ENCODE measurements at regions of chr14 and their contacts with region 1.

Region 1: DNA sequence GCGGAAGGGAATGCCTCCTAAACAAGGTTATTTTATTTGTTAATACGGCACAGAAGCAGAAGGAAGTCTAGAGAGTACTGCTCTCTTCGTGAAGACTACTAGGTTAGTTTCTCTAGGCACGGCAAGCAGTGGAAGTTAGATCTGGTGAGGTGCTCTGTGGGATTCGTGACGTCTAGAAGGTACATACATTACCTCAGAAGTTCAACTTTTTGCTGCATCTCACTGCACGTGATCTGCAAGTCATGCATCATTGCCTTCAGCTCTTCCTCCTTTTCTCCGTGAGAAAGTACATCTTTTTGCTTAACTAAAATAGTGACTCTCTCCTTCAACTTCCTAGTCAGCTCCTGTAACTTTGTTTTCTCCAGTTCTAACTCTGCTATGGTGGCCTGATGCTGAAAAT is 74.7 kb downstream of the NIN start:
- DNase-seq: peak; percentile 22
- CTCF ChIP-seq: no peak

Region 2: DNA sequence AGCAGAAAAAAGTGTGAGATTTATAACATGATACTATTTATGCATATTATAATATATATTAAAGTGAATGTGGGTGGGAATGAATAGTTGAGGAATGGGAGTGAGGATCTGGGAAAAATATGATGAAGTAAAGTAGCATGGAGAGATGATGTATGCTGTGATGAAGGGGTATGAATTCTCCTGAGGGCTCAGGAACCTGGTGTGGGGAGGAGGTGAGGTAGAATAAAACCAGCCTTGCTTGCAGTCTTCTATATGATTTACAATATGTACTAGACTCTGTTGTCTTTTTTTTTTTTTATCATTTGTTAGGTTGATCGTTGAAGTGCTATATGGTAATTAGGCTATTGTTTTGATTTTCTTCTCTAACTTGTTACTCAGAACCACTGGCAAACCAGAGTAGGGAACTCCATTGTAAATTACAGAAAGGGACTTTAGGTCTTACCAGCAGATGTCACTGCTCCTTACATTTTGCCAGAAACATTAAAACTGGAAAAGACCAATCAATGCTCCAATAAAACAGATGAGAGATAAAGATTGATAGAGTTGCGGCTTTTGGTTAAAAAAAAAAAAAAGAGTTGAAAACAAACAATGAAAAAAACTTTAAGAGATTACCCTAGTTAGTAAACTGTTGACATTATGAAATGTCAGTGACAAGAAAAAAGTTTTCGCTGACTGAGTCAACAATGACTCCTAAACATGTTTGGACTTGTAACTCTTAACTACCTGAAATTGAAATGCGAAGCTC is 156.4 kb before region 1 on chr14:
- CTCF ChIA-PET with region 1: interaction called, 10 read pairs
- POLR2A ChIA-PET with region 1: no interaction called
- DNase-seq: peak; percentile 17
- CTCF ChIP-seq: peak; percentile 54

Region 3: DNA sequence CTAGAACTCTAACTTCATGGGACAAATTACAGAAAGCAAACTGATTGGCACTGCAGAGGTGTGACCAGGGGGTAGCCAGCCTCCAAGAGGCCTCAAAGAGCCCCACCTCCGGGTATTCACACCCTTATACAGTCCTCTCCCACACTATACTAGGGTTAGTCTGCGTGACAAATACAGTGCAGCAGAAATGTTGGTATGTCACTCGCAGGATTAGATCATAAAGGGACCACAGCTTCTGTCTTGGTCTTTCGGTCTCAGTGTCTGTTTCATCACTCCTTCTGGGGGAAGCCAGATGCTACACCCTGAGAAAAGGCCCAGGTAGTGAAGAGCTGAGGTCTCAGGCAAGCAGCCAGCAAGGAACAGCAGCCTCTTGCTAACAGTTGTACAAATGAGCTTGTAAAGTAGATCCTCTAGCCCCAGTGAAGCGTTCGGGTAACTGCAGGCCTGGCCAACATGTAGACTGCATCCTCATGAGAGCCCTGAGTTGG is 19.3 kb before region 1 on chr14:
- CTCF ChIA-PET with region 1: interaction called, 18 read pairs
- POLR2A ChIA-PET with region 1: interaction called, 6 read pairs
- DNase-seq: peak; percentile 70
- CTCF ChIP-seq: no peak

Region 4: DNA sequence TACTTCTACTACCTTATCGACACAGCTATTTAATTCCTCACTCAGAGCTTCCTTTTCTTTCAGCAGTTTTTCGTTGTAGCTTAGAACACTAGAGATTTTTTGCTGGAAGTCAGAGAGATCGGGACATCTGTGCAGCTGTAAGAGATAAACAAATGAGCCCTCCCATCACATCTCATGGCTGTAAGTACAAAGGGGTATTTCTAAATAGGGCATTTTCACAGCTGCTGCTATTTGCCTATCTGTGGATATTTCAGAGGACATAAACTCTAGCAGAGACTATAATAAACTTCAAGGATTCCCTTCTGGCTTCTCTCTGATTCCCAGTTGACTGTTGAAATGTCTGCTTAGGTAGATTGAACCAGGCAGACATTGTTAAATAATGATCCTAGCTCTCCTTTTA is 12.1 kb before region 1 on chr14:
- CTCF ChIA-PET with region 1: interaction called, 18 read pairs
- POLR2A ChIA-PET with region 1: no interaction called
- DNase-seq: no peak
- CTCF ChIP-seq: no peak

Region 5: DNA sequence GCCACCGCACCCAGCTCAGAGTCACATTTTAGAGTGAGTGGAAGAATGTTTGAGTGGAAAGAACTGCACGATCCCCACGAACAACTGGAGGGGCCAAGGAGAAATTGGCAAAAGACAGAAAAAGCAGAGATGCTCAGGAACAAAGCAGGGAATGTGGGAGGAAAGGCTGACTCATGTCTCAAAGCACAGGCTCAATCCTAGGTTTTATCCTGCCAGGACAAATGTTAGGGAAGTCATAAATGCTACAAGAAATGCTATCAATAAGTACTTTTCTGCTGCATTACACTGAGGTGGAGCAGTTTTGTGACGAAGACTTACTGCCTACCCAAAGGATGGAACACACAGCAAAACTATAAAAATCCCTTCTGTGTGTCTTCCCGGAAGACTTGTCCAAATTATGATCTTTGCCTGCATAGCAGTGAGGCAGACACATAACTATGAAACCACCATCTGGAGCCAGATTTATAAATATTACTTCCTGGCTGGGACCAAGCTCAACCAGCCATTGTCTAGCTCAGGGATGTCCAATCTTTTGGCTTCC is 48.0 kb after region 1 on chr14:
- CTCF ChIA-PET with region 1: no interaction called
- POLR2A ChIA-PET with region 1: no interaction called
- DNase-seq: no peak
- CTCF ChIP-seq: no peak

Region 6: DNA sequence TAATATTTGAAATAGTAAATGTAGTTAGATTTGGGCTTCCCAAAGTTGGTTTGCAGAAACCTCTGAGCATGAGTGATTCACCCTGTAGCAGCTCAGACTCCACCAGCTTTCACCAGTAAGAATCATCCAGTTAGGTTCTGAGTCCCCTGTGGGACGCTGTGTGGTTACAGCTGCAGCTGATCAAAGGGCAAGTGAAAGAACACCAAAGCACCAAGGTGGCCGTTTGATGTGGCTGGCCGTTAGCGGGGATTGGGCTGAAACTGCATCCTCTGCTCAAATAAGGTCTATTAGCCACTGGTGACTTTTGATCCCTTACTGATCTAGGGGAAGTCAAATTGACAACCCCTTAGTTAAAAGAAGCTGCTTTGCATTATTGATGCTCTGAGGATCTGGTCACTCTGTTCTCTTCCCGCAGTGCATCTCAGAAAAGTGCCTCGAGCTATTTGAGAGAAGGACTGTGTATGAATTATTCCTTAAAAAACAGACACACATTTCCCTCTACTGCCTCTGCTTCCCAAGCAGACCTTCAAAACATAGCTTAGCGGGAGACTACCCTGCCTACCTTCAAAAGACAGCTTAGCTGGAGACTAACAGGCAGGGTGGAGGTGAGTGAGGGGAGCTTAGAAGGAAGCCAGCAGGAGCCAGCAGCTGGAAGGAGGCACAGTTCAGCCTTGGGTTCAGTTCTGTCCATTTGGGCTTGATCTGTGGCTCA is 119.2 kb after region 1 on chr14:
- CTCF ChIA-PET with region 1: no interaction called
- POLR2A ChIA-PET with region 1: no interaction called
- DNase-seq: peak; percentile 78
- CTCF ChIP-seq: no peak